ENCODE measurements at regions of chr2 and their contacts with region 1.

Region 1: GRCh38 chr2:101205521-101205998 is 47.1 kb upstream of the CNOT11 start:
- DNase-seq: peak in 8 of 10 donors; percentile 39 to 67 (median 50)
- H3K4me3 ChIP-seq: peak overlapping the region in 54 of 59 donors; percentile 1 to 59 (median 39)
- H3K27ac ChIP-seq: peak overlapping the region in 4 of 59 donors; percentile 2 to 44 (median 32)
- H3K27me3 ChIP-seq: no peaks in the 10 kb centered on the region
- CTCF ChIP-seq: peak; percentile 26 to 81 (median 60)

Region 2: GRCh38 chr2:100615471-100615870 is 590.1 kb before region 1 on chr2:
- intact Hi-C with region 1: loop called in 1 of 2 experiments (anchors 5 kb)
- DNase-seq: no peak
- H3K4me3 ChIP-seq: no peak overlapping the region
- H3K27ac ChIP-seq: no peak overlapping the region
- H3K27me3 ChIP-seq: no peaks in the 10 kb centered on the region
- CTCF ChIP-seq: no peak

Region 3: DNA sequence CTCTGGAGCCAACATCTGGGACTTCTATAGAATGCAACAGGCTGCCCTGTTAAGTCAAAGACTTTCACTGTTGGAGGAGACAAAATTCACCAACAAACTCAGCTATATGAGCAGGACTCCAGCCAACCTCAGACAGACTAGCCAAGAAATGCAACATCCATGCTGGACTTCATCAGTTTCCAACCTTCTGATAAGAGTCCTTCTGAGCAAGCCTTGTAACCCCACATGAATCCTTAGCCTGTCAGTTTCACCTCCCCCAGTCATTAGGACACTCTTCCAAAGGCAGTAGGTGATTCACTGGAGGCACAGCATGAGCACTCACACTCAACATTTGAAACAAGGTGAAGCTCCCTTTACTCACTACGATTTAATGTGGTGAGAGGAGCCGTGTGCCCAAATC is 60.2 kb before region 1 on chr2:
- intact Hi-C with region 1: no loop called
- DNase-seq: no peak
- H3K4me3 ChIP-seq: no peak overlapping the region
- H3K27ac ChIP-seq: no peak overlapping the region
- H3K27me3 ChIP-seq: no peaks in the 10 kb centered on the region
- CTCF ChIP-seq: no peak